IMR-90 (cell line): ENCODE measurements at regions of chr18 and their contacts with region 1.

Region 1: DNA sequence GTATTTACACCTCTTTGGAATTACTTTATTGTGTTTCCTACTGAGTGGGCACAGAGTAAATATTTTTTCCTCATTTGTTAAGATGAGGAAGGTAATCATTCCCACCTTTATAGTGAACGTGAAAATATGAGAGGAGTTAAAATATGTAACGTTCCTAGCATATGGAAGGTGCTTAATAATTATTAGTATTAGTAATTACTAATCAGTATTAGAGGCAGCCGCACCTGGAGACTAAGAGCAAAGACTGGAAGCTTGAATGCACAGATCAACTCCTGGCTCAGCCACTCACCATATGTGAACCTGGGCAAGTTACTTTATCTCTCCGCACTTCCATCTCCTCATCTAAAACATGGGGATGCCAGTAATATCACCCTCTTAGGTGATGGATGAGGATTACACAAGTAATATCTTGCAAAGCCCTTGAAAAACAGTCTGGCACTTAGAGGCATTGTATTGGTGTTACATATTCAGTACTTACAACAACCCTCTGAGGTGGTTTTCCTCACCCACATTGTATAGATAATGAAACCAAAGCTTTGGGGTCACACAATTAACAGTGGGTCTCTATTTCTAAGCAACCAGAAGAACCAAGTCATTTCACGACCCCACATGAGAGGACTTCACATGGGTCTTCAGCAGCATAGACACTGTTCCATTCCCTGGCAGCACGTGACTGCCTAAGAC is 100.3 kb upstream of the KCTD1 start:
- DNase-seq: no peak
- ATAC-seq: no peak
- H3K4me3 ChIP-seq: no peak overlapping the region
- H3K27ac ChIP-seq: no peak overlapping the region
- H3K4me1 ChIP-seq: no peaks in the 10 kb centered on the region
- H3K27me3 ChIP-seq: peaks cover 9% of the 10 kb centered on the region
- CTCF ChIP-seq: no peak
- POLR2A ChIP-seq: no peak
- RAD21 ChIP-seq: no peak

Region 2: DNA sequence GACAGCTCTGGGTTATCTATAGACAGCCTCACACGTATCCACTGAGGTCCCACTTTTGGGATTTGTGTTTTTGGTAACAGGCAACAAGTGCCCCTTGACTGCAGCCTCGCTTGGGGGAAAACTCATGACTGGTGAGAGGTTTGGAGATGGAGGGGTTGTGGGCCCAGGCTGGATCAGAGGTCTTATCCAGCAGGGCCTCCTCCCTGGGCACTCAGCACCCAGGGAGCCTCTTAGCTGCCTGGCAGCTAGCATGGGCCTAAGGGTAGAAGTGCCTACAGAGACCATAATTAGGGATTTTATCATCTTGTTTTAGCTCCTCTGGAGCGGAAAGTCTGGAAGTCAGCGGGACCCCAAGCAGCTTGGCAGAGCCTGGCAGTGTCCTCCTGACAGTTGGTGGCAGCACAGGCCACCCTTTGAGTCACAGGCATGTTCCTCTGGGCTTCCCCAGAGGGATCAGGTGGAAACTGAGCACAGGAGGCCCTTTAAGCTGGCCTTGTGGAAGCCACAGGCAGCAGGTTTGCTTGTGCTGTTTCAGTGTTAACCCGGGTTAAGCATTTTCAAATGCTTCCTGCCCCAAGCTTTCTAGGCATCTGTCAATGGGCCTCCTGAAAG is 243.4 kb before region 1 on chr18:
- CTCF ChIA-PET with region 1: interaction called, 8 read pairs
- POLR2A ChIA-PET with region 1: no interaction called
- dilution Hi-C with region 1: no loop called
- in situ Hi-C with region 1: loop called (anchors 5 kb)
- intact Hi-C with region 1: loop called (anchors 1 kb)
- DNase-seq: peak; percentile 53
- ATAC-seq: peak; percentile 87
- H3K4me3 ChIP-seq: no peak overlapping the region
- H3K27ac ChIP-seq: no peak overlapping the region
- H3K4me1 ChIP-seq: no peaks in the 10 kb centered on the region
- H3K27me3 ChIP-seq: peaks cover 15% of the 10 kb centered on the region
- CTCF ChIP-seq: peak; percentile 66
- POLR2A ChIP-seq: no peak
- RAD21 ChIP-seq: peak; percentile 82

Region 3: GRCh38 chr18:26422472-26423162 is 226.0 kb before region 1 on chr18:
- CTCF ChIA-PET with region 1: no interaction called
- POLR2A ChIA-PET with region 1: no interaction called
- dilution Hi-C with region 1: no loop called
- in situ Hi-C with region 1: no loop called
- intact Hi-C with region 1: no loop called
- DNase-seq: no peak
- ATAC-seq: no peak
- H3K4me3 ChIP-seq: no peak overlapping the region
- H3K27ac ChIP-seq: no peak overlapping the region
- H3K4me1 ChIP-seq: no peaks in the 10 kb centered on the region
- H3K27me3 ChIP-seq: peaks cover 11% of the 10 kb centered on the region
- CTCF ChIP-seq: no peak
- POLR2A ChIP-seq: no peak
- RAD21 ChIP-seq: no peak